Activated CD4-positive, alpha-beta memory T cell treated with anti-CD3 and anti-CD28 coated beads, Interleukin-2, amount 10 ng/mL, durations not matched to agents 7 days and 5 days (primary cell): ENCODE measurements at regions of chr7 and their contacts with region 1.

Region 1: DNA sequence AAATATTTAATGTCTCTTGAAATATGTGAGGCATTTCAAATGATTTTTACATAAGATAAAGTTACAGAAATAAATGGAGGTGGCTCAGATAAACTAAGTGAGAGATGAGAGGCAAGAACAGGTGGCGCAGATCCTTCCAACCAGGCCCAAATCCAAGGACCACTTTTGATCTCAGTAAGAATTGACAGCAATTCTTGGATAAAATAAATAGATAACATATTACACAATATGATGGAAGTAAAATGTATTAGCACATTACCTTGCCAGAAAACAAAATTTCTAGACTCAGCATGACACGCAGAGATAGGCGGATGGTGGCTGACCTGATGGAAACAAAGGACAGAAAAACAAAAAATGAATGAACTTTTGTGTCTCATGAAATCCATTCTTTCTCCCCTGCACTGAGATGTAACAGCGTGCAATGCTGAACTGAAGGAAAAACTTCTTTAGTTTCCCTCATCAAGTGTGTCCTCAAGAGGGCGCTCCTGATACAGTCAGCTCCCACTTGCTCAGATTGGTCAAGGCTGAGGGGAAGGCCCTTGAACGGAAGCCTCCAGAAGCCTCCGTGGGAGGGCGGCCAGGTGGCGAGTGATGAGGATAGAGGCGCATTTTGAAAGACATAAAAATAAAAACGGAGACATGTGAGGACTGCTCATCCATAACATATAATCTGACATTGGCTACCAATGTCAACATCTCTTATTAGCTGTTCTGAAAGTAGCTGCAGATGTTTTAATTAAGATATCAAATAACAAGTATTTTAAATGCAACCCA is 62.8 kb upstream of the GSDME start:
- DNase-seq: peak; percentile 80
- H3K4me3 Mint-ChIP-seq: peak overlapping the region; percentile 64
- H3K27ac Mint-ChIP-seq: peak overlapping the region; percentile 100
- H3K4me1 Mint-ChIP-seq: peaks cover 46% of the 10 kb centered on the region
- H3K27me3 Mint-ChIP-seq: no peaks in the 10 kb centered on the region

Region 2: GRCh38 chr7:24800667-24801066 is 19.4 kb before region 1 on chr7:
- CTCF ChIA-PET with region 1: interaction called, 5 read pairs
- POLR2A ChIA-PET with region 1: interaction called, 11 read pairs
- DNase-seq: no peak
- H3K4me3 Mint-ChIP-seq: no peak overlapping the region
- H3K27ac Mint-ChIP-seq: peak overlapping the region; percentile 64
- H3K4me1 Mint-ChIP-seq: peaks cover 14% of the 10 kb centered on the region
- H3K27me3 Mint-ChIP-seq: no peaks in the 10 kb centered on the region

Region 3: GRCh38 chr7:24877790-24878311 is 57.7 kb after region 1 on chr7:
- CTCF ChIA-PET with region 1: interaction called, 6 read pairs
- POLR2A ChIA-PET with region 1: interaction called, 16 read pairs
- DNase-seq: peak; percentile 50
- H3K4me3 Mint-ChIP-seq: peak overlapping the region; percentile 40
- H3K27ac Mint-ChIP-seq: peak overlapping the region; percentile 78
- H3K4me1 Mint-ChIP-seq: peaks cover 41% of the 10 kb centered on the region
- H3K27me3 Mint-ChIP-seq: no peaks in the 10 kb centered on the region

Region 4: GRCh38 chr7:24921362-24921679 is 101.2 kb after region 1 on chr7:
- CTCF ChIA-PET with region 1: interaction called, 8 read pairs
- POLR2A ChIA-PET with region 1: interaction called, 11 read pairs
- DNase-seq: peak; percentile 51
- H3K4me3 Mint-ChIP-seq: peak overlapping the region; percentile 26
- H3K27ac Mint-ChIP-seq: peak overlapping the region; percentile 96
- H3K4me1 Mint-ChIP-seq: peaks cover 93% of the 10 kb centered on the region
- H3K27me3 Mint-ChIP-seq: no peaks in the 10 kb centered on the region

Region 5: DNA sequence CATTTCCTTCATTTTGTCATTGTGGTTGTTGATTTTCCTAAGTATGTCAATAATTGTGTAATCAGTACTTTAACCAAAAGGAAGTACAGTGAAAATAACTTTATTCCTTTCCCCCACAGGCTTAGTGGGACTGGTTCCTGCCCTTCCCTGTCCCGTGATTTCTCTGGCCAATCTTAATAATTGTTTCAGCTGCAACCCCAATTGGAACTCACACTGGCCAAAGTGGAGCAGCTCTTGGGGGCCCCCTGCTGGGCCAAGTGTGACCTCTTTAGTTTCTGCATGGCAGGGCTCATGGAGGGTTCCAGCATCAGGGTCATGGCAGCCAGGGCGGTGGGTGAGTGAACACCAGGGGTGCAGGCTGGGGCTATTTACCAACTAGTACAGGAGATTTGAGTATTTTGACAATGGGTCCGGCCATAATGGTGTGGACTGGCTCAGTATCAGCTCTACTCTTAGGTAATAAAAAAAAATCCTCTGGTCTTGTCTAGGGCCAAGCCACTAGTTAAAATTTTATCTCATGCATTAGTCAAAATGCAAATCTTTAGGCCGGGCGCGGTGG is 273.2 kb after region 1 on chr7:
- CTCF ChIA-PET with region 1: interaction called, 32 read pairs
- POLR2A ChIA-PET with region 1: interaction called, 5 read pairs
- DNase-seq: peak; percentile 83
- H3K4me3 Mint-ChIP-seq: no peak overlapping the region
- H3K27ac Mint-ChIP-seq: no peak overlapping the region
- H3K4me1 Mint-ChIP-seq: peaks cover 12% of the 10 kb centered on the region
- H3K27me3 Mint-ChIP-seq: peaks cover 12% of the 10 kb centered on the region

Region 6: GRCh38 chr7:25125137-25125946 is 305.2 kb after region 1 on chr7 and contains the start of gene CYCS:
- CTCF ChIA-PET with region 1: interaction called, 4 read pairs
- POLR2A ChIA-PET with region 1: interaction called, 18 read pairs
- DNase-seq: peak; percentile 100
- H3K4me3 Mint-ChIP-seq: peak within 1 kb of the TSS; percentile 93
- H3K27ac Mint-ChIP-seq: peak within 1 kb of the TSS; percentile 97
- H3K4me1 Mint-ChIP-seq: peaks cover 33% of the 10 kb centered on the region
- H3K27me3 Mint-ChIP-seq: peaks cover 2% of the 10 kb centered on the region
- total RNA-seq, gene CYCS: 108 to 111 TPM

Region 7: GRCh38 chr7:25171071-25171470 is 351.0 kb after region 1 on chr7:
- CTCF ChIA-PET with region 1: no interaction called
- POLR2A ChIA-PET with region 1: no interaction called
- DNase-seq: no peak
- H3K4me3 Mint-ChIP-seq: no peak overlapping the region
- H3K27ac Mint-ChIP-seq: no peak overlapping the region
- H3K4me1 Mint-ChIP-seq: no peaks in the 10 kb centered on the region
- H3K27me3 Mint-ChIP-seq: no peaks in the 10 kb centered on the region